H1 (cell line): ENCODE measurements at regions of chr2 and their contacts with region 1.

Region 1: GRCh38 chr2:134466141-134466540 is 212.3 kb downstream of the MGAT5 start:
- DNase-seq: peak in 1 of 2 experiments; percentile 68
- H3K4me3 ChIP-seq: no peak overlapping the region
- H3K27ac ChIP-seq: no peak overlapping the region
- H3K4me1 ChIP-seq: no peaks in the 10 kb centered on the region; a peak in 1 of 7 replicates
- H3K27me3 ChIP-seq: no peaks in the 10 kb centered on the region
- CTCF ChIP-seq: peak; percentile 34 to 71 (median 69)
- EP300 ChIP-seq: no peak
- POLR2A ChIP-seq: no peak
- RAD21 ChIP-seq: peak; percentile 71 to 80

Region 2: DNA sequence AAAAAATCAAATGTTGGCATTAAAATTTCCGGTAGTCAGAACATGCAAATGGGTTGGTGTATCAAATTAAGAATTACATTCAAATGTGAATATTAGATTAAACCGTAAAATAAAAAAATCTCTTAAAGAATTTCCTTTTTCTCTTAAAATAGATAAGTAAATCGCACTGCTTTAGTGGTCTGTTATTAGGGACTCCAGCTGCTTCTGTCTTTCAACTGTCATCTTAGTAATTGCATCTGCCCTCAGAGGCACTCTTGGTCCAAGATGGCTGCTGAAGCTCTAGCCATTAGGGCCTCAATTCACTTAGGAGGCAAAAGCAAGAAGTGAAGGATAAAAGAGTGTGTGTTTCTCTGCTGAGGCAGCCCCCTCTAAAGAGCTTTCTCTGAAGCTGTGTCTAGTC is 79.8 kb before region 1 on chr2:
- CTCF ChIA-PET with region 1: no interaction called
- POLR2A ChIA-PET with region 1: no interaction called
- DNase-seq: no peak
- H3K4me3 ChIP-seq: no peak overlapping the region
- H3K27ac ChIP-seq: no peak overlapping the region
- H3K4me1 ChIP-seq: no peaks in the 10 kb centered on the region
- H3K27me3 ChIP-seq: no peaks in the 10 kb centered on the region
- CTCF ChIP-seq: no peak
- EP300 ChIP-seq: no peak
- POLR2A ChIP-seq: no peak
- RAD21 ChIP-seq: no peak

Region 3: DNA sequence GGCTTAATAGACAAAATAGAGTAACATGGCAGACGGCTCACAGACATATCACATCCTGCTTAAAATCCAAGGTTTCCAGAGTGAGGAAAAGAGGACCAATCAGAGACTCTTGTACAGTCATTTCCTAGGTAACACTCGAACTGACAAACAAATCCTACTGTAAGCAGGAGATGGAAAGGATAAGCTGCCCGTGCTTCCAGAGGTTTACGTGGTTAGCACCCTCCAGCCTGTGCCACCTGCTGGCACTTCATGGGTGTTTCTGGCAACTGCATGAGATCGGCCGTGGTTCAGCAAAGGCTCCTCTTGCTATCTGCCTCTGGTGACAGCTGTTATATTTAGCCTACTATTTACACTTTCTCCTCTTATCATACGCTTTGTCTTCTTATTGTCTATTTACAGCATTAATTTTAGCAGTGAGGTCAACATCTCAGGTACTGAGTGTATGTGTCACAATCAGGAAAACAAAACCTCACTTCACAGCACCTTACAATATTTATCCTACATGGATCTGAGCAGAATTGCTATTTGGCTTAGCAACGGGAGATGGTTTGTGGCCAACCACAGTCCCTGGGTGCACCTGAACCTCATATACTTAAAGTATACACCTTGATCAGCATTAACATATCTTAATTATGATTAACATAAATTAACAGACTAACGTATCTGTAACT is 25.8 kb after region 1 on chr2:
- CTCF ChIA-PET with region 1: interaction called, 12 read pairs
- POLR2A ChIA-PET with region 1: no interaction called
- DNase-seq: no peak
- H3K4me3 ChIP-seq: no peak overlapping the region
- H3K27ac ChIP-seq: no peak overlapping the region
- H3K4me1 ChIP-seq: no peaks in the 10 kb centered on the region
- H3K27me3 ChIP-seq: no peaks in the 10 kb centered on the region
- CTCF ChIP-seq: no peak
- EP300 ChIP-seq: no peak
- POLR2A ChIP-seq: no peak
- RAD21 ChIP-seq: no peak

Region 4: GRCh38 chr2:134499307-134499926 is 33.3 kb after region 1 on chr2:
- CTCF ChIA-PET with region 1: interaction called, 12 read pairs
- POLR2A ChIA-PET with region 1: no interaction called
- DNase-seq: no peak
- H3K4me3 ChIP-seq: no peak overlapping the region
- H3K27ac ChIP-seq: no peak overlapping the region
- H3K4me1 ChIP-seq: peaks cover 0 to 8% (median 0%) of the 10 kb centered on the region in 4 experiments; a peak in 3 of 7 replicates
- H3K27me3 ChIP-seq: no peaks in the 10 kb centered on the region
- CTCF ChIP-seq: no peak
- EP300 ChIP-seq: no peak
- POLR2A ChIP-seq: no peak
- RAD21 ChIP-seq: no peak

Region 5: GRCh38 chr2:134581877-134582546 is 115.9 kb after region 1 on chr2:
- CTCF ChIA-PET with region 1: no interaction called
- POLR2A ChIA-PET with region 1: no interaction called
- DNase-seq: no peak
- H3K4me3 ChIP-seq: no peak overlapping the region
- H3K27ac ChIP-seq: no peak overlapping the region
- H3K4me1 ChIP-seq: no peaks in the 10 kb centered on the region
- H3K27me3 ChIP-seq: no peaks in the 10 kb centered on the region; a peak in 1 of 7 replicates
- CTCF ChIP-seq: no peak
- EP300 ChIP-seq: no peak
- POLR2A ChIP-seq: no peak
- RAD21 ChIP-seq: no peak